ENCODE measurements at regions of chr20 and their contacts with region 1.

Region 1: DNA sequence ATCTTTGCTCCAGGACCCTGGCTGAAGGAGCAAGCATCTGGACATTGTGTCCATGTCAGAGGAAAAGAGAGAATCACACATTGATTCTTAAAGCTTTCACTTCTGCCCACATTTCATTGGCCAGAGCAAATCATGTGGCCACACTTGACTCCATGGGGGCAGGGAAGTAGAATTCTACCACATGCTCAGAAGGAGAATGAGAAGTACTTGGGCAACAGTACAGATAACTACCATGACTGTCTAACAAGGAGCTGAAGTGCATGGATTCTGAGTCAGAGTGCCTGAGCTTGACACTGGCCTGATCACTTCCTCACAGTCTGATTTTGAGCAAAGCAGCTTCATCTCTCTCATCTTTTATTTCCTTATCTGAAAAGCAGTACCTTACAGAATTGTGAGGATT is 38.6 kb downstream of the GHRH start:
- DNase-seq: peak; percentile 26
- CTCF ChIP-seq: no peak

Region 2: DNA sequence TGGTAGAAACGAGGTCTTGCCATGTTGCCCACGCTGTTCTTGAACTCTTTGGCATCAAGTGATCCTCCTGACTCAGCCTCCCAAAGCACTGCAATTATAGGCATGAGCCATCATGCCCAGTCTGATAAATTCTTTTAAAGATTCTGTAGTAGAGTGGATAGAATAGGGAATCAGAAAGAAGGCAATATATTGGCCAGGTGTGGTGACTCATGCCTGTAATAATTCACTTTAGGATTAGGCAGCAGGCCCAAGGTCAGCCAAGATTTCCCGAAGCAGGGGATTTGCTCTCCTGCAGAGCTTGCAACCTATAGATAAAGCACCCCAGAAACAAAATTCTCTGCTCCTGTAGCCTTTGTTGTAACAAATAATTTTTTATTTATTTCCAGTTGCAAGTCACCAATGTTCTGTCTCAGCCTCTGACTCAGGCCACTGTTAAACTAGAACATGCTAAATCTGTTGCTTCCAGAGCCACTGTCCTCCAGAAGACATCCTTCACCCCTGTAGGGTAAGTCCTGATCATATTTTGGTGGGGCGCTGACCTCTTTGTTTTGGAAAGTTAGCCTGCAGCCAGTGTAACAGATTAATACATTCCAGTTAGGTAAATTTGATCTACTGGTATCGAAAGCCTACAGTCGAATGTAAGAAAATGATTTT is 13.3 kb before region 1 on chr20:
- CTCF ChIA-PET with region 1: interaction called, 11 read pairs
- POLR2A ChIA-PET with region 1: interaction called, 6 read pairs
- DNase-seq: no peak
- CTCF ChIP-seq: no peak

Region 3: GRCh38 chr20:37308086-37309050 is 85.3 kb after region 1 on chr20:
- CTCF ChIA-PET with region 1: no interaction called
- POLR2A ChIA-PET with region 1: no interaction called
- DNase-seq: peak; percentile 82
- CTCF ChIP-seq: no peak